ENCODE measurements at regions of chr16 and their contacts with region 1.

Region 1: GRCh38 chr16:106623-107324 is 28.7 kb downstream of the MPG start:
- DNase-seq: peak; percentile 50
- ATAC-seq: peak; percentile 87
- H3K4me3 Mint-ChIP-seq: no peak overlapping the region
- H3K27ac Mint-ChIP-seq: peak overlapping the region; percentile 32; the same call in 1 of the 2 replicates
- H3K4me1 Mint-ChIP-seq: 0 out of 2 replicates have a peak, but pooled peaks cover 3% of the 10 kb centered on the region
- H3K27me3 Mint-ChIP-seq: no peaks in the 10 kb centered on the region
- CTCF ChIP-seq: peak; percentile 84

Region 2: DNA sequence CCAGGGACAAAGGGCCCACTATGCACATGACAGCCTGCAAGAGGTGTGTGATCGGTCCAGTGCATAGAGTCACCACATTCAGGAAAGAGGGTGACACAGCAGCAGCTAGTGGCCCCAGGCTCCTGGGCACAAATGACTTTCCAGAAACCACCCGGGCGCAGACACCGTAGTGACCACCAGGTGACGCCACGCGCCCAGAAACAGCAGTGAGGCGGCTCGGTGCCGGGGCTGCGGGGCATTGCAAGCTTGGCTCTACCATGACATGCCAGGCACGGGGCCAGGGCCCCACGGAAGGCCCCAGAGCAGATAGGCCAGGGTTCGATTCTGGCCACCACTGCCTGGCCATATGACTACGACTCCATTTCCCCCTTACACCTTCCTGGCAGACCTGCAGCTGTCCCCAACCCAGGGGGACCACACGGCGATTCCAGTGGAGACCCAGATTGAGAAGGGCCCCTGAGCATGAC is 41.1 kb before region 1 on chr16:
- CTCF ChIA-PET with region 1: interaction called, 68 read pairs
- POLR2A ChIA-PET with region 1: no interaction called
- DNase-seq: peak; percentile 92
- ATAC-seq: peak; percentile 80
- H3K4me3 Mint-ChIP-seq: no peak overlapping the region
- H3K27ac Mint-ChIP-seq: no peak overlapping the region
- H3K4me1 Mint-ChIP-seq: peaks cover 19% of the 10 kb centered on the region
- H3K27me3 Mint-ChIP-seq: no peaks in the 10 kb centered on the region
- CTCF ChIP-seq: peak; percentile 93

Region 3: DNA sequence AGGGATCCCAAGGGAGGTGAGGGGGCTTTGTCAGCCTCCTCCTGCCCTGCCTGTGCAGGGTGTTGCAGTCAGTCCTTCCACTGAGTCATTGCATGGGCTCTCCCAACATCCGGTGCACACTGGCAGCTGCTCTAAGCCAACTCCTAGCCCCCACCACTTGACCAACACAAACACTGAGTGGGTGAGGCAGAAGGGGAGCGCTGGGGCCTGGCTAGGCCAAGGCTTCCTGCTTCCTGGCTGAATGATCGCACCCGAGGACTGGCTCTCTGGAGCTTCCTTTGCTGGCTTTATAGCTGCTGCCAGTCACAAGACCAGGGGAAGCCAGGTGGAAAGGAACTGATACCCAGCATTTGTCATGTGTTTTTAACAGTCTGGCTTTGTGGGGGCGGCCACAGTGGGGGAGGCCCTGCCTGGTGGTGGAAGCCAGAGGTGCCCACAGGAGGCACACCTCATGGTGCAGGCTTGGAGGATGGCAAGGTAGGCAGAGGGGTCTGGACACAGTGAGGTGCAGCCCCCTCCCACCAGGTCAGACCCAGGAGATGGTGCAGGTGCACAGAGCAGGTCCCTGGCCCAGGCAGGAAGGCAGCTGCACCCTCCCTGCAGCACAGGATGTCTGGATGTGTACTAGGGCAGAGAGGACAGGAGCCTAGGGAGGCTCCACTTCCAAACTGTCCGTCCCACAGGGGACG is 21.9 kb before region 1 on chr16:
- CTCF ChIA-PET with region 1: interaction called, 14 read pairs
- POLR2A ChIA-PET with region 1: no interaction called
- DNase-seq: no peak
- ATAC-seq: no peak
- H3K4me3 Mint-ChIP-seq: no peak overlapping the region
- H3K27ac Mint-ChIP-seq: peak overlapping the region; percentile 45; the same call in 1 of the 2 replicates
- H3K4me1 Mint-ChIP-seq: peaks cover 8% of the 10 kb centered on the region; the same call in 1 of the 2 replicates
- H3K27me3 Mint-ChIP-seq: no peaks in the 10 kb centered on the region
- CTCF ChIP-seq: no peak

Region 4: GRCh38 chr16:117379-118365 is 10.9 kb after region 1 on chr16:
- CTCF ChIA-PET with region 1: interaction called, 73 read pairs
- POLR2A ChIA-PET with region 1: interaction called, 3 read pairs
- DNase-seq: peak; percentile 84
- ATAC-seq: peak; percentile 97
- H3K4me3 Mint-ChIP-seq: no peak overlapping the region
- H3K27ac Mint-ChIP-seq: no peak overlapping the region
- H3K4me1 Mint-ChIP-seq: peaks cover 5% of the 10 kb centered on the region
- H3K27me3 Mint-ChIP-seq: no peaks in the 10 kb centered on the region
- CTCF ChIP-seq: peak; percentile 92

Region 5: DNA sequence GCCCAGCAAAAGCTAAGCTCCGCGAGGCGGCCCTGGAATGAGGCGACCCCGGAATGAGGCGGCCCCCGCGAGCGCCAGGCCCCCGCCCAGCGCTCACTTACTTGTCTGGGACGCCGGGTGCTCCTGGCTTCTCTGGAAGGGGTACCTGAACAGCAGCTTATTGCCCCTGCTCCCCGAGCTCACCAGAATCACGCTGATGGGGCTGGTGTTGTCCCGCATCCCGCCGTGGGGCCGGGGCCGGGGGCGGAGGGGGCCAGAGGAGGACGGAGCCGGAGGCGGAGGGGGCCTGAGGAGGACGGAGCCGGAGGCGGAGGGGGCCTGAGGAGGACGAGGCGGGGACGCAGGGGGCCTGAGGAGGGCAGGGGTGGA is 31.3 kb after region 1 on chr16:
- CTCF ChIA-PET with region 1: interaction called, 13 read pairs
- POLR2A ChIA-PET with region 1: no interaction called
- DNase-seq: peak; percentile 57
- ATAC-seq: peak; percentile 27
- H3K4me3 Mint-ChIP-seq: peak overlapping the region; percentile 80
- H3K27ac Mint-ChIP-seq: no peak overlapping the region
- H3K4me1 Mint-ChIP-seq: no peaks in the 10 kb centered on the region
- H3K27me3 Mint-ChIP-seq: peaks cover 12% of the 10 kb centered on the region
- CTCF ChIP-seq: no peak

Region 6: DNA sequence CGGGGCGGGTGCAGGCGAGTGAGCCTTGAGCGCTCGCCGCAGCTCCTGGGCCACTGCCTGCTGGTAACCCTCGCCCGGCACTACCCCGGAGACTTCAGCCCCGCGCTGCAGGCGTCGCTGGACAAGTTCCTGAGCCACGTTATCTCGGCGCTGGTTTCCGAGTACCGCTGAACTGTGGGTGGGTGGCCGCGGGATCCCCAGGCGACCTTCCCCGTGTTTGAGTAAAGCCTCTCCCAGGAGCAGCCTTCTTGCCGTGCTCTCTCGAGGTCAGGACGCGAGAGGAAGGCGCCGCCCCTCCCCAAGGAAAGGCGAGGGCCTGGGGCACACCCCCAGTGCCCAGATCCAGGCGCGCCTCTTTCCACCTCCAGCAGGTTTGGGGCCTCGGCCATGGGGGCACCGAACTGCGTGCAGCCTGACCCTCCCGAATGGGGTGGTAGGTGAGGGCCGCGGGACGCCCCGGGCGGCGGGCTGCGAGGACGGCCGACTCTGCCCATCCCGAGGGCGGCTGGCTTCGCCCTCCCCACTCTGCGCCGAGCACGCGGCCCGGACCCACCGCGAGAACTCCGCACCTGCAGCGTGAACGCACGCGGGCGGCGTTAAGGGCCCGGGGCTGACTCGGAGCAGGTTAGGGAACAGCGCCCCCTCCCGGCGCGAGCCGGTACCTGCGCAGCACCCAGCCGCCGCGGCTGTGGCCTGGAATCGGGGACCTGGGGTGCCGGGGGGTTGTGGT is 74.3 kb after region 1 on chr16:
- CTCF ChIA-PET with region 1: interaction called, 50 read pairs
- POLR2A ChIA-PET with region 1: no interaction called
- DNase-seq: peak; percentile 93
- ATAC-seq: peak; percentile 65
- H3K4me3 Mint-ChIP-seq: peak overlapping the region; percentile 56
- H3K27ac Mint-ChIP-seq: no peak overlapping the region
- H3K4me1 Mint-ChIP-seq: no peaks in the 10 kb centered on the region
- H3K27me3 Mint-ChIP-seq: peaks cover 41% of the 10 kb centered on the region
- CTCF ChIP-seq: peak; percentile 99

Region 7: DNA sequence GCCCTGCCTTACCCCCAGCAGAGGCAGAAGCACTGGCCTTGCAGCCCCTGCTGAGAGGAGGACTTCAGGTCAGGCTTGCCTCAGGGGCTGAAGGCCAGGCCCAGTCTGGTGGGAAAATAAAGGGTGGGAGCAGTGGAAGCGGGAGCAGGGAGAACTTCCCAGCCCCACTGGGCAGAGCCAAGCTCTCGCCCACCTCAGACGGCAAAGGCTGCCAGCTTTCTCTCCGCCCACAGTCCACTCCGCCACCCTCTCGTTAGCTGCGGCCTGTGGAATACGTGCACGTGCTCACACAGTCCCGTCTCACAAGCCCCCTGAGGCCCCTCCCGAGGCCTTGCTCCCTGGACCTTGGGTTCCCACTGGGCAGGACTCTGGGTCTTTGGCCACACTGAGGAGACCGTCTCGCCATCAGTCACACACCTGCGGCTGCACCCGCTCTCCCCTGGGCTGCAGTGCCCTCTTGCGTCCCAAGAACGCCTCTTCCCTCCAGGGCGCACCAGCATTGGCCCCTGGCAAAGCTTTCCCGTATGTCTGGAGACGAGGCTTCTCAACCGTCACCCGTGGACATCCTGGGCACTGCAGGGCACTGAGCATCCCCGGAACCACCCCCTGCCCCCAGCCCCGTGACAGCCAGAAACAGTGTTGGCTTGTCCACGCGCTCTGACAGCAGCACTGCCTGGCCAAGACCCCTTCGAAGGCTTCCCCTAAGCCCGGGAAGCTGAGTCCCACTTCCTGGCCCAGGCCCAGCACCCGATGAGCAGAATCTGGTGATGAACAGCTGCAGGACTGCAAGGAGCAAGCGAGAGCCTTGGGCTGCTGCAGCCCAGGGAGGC is 255.3 kb after region 1 on chr16:
- CTCF ChIA-PET with region 1: interaction called, 33 read pairs
- POLR2A ChIA-PET with region 1: no interaction called
- DNase-seq: peak; percentile 83
- ATAC-seq: peak; percentile 79
- H3K4me3 Mint-ChIP-seq: no peak overlapping the region
- H3K27ac Mint-ChIP-seq: no peak overlapping the region
- H3K4me1 Mint-ChIP-seq: no peaks in the 10 kb centered on the region
- H3K27me3 Mint-ChIP-seq: no peaks in the 10 kb centered on the region
- CTCF ChIP-seq: 0 out of 2 replicates have a peak, but pooled peaks have one; percentile 30